ENCODE measurements at regions of chr4 and their contacts with region 1.

Region 1: GRCh38 chr4:48963042-48963679 is 22.9 kb upstream of the CWH43 start:
- DNase-seq: peak; percentile 90
- H3K4me3 ChIP-seq: no peak overlapping the region
- H3K27ac ChIP-seq: no peak overlapping the region
- H3K4me1 ChIP-seq: no peaks in the 10 kb centered on the region
- H3K27me3 ChIP-seq: peaks cover 5 to 12% of the 10 kb centered on the region in 2 experiments
- CTCF ChIP-seq: peak; percentile 88 to 99
- POLR2A ChIP-seq: no peak

Region 2: GRCh38 chr4:48445704-48446103 is 517.5 kb before region 1 on chr4:
- CTCF ChIA-PET with region 1: no interaction called
- POLR2A ChIA-PET with region 1: no interaction called
- dilution Hi-C with region 1: no loop called
- intact Hi-C with region 1: loop called (anchors 1 kb)
- DNase-seq: peak; percentile 13
- H3K4me3 ChIP-seq: no peak overlapping the region
- H3K27ac ChIP-seq: no peak overlapping the region
- H3K4me1 ChIP-seq: no peaks in the 10 kb centered on the region
- H3K27me3 ChIP-seq: no peaks in the 10 kb centered on the region
- CTCF ChIP-seq: peak; percentile 13 to 18
- POLR2A ChIP-seq: no peak

Region 3: DNA sequence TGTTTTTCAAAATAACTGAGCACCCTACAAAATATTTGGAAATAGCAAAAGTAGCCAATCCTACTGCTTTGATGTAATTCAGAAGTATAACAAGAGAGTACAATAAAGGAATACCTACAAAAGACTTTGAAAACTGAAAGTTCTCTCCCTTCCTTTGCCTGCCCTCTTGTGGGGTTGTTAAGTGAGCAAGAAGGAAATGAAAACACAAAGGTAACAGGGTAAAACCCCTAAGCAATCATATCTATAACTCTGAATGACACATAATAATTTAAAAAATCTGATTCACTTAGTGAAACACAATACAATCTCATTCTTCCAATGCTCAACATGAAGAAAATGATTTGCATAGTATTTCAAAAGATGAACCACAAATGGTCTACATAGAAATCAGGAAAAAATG is 281.3 kb before region 1 on chr4:
- CTCF ChIA-PET with region 1: no interaction called
- POLR2A ChIA-PET with region 1: no interaction called
- dilution Hi-C with region 1: no loop called
- intact Hi-C with region 1: loop called (anchors 1 kb)
- DNase-seq: peak; percentile 73
- H3K4me3 ChIP-seq: no peak overlapping the region
- H3K27ac ChIP-seq: no peak overlapping the region
- H3K4me1 ChIP-seq: peaks cover 9% of the 10 kb centered on the region
- H3K27me3 ChIP-seq: no peaks in the 10 kb centered on the region
- CTCF ChIP-seq: peak; percentile 8 to 33
- POLR2A ChIP-seq: no peak

Region 4: GRCh38 chr4:48877827-48878533 is 85.2 kb before region 1 on chr4:
- CTCF ChIA-PET with region 1: no interaction called
- POLR2A ChIA-PET with region 1: no interaction called
- dilution Hi-C with region 1: no loop called
- intact Hi-C with region 1: loop called (anchors 2 kb)
- DNase-seq: no peak
- H3K4me3 ChIP-seq: no peak overlapping the region
- H3K27ac ChIP-seq: no peak overlapping the region
- H3K4me1 ChIP-seq: no peaks in the 10 kb centered on the region
- H3K27me3 ChIP-seq: no peaks in the 10 kb centered on the region
- CTCF ChIP-seq: no peak
- POLR2A ChIP-seq: no peak

Region 5: GRCh38 chr4:48906206-48907173 is 56.7 kb before region 1 on chr4 and contains the start of gene OCIAD2:
- CTCF ChIA-PET with region 1: no interaction called
- POLR2A ChIA-PET with region 1: no interaction called
- dilution Hi-C with region 1: no loop called
- intact Hi-C with region 1: loop called (anchors 2 kb)
- DNase-seq: peak; percentile 70
- H3K4me3 ChIP-seq: peak within 1 kb of the TSS; percentile 57 to 65 (median 61)
- H3K27ac ChIP-seq: peak within 1 kb of the TSS; percentile 82
- H3K4me1 ChIP-seq: peaks cover 28% of the 10 kb centered on the region
- H3K27me3 ChIP-seq: no peaks in the 10 kb centered on the region
- CTCF ChIP-seq: no peak
- POLR2A ChIP-seq: peak; percentile 23
- total RNA-seq, gene OCIAD2: 99.0 and 123 TPM in 2 replicates

Measured in endothelial cell of umbilical vein (primary cell).